GM18951 (cell line): ENCODE measurements at regions of chr7 and their contacts with region 1.

Region 1: GRCh38 chr7:116173051-116174028 is 37.0 kb upstream of the TES start:
- POLR2A ChIP-seq: no peak

Region 2: GRCh38 chr7:116236020-116236630 is 62.8 kb after region 1 on chr7:
- in situ Hi-C with region 1: loop called (anchors 10 kb)
- POLR2A ChIP-seq: no peak

Region 3: GRCh38 chr7:116367221-116367813 is 194.0 kb after region 1 on chr7:
- in situ Hi-C with region 1: no loop called
- POLR2A ChIP-seq: no peak

Region 4: DNA sequence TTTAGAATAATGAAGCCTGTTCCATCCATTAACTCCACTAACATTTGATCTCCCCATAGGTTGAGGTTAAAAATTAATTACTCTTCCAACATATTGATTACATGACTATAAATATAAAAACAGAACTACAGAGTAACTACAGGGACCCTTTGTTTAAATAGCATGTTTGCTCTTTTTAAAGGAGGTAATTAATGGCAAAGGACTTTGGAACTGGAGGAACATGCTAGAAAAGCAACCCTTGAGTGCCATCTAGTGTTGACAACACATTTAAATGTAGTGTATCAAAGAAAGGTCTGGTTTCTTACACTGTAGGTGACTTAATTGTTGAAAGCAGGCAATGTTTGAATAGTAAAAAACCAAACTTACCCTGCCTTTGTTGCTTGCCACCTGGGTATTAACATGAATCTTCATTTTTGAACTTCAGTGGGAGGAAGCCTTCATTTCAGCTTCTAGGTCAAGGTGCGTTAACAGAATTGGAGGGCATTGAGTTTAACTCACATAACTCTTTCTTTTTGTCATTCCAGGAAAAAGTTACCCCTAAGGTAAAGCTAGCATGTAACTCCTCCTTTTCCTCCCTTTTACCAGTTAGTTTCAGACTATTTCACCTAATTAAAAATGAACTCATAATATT is 636.4 kb after region 1 on chr7:
- in situ Hi-C with region 1: loop called (anchors 10 kb)
- POLR2A ChIP-seq: no peak